Left ventricle myocardium inferior (tissue), 1 donor: ENCODE measurements at regions of chr19 and their contacts with region 1.

Region 1: GRCh38 chr19:9295411-9295849 is 14.2 kb downstream of the ZNF699 start:
- DNase-seq: no peak
- H3K4me3 ChIP-seq: no peak overlapping the region
- H3K27ac ChIP-seq: no peak overlapping the region
- H3K4me1 ChIP-seq: no peaks in the 10 kb centered on the region
- H3K27me3 ChIP-seq: no peaks in the 10 kb centered on the region
- CTCF ChIP-seq: no peak

Region 2: GRCh38 chr19:9075064-9075949 is 220.1 kb before region 1 on chr19:
- intact Hi-C with region 1: no loop called
- DNase-seq: peak; percentile 33
- H3K4me3 ChIP-seq: no peak overlapping the region
- H3K27ac ChIP-seq: no peak overlapping the region
- H3K4me1 ChIP-seq: peaks cover 10% of the 10 kb centered on the region
- H3K27me3 ChIP-seq: no peaks in the 10 kb centered on the region
- CTCF ChIP-seq: no peak

Region 3: GRCh38 chr19:9342610-9343304 is 47.3 kb after region 1 on chr19:
- intact Hi-C with region 1: loop called (anchors 5 kb)
- DNase-seq: no peak
- H3K4me3 ChIP-seq: no peak overlapping the region
- H3K27ac ChIP-seq: no peak overlapping the region
- H3K4me1 ChIP-seq: no peaks in the 10 kb centered on the region
- H3K27me3 ChIP-seq: no peaks in the 10 kb centered on the region
- CTCF ChIP-seq: no peak

Region 4: GRCh38 chr19:9362905-9363304 is 67.5 kb after region 1 on chr19 and contains the start of gene ZNF177:
- intact Hi-C with region 1: no loop called
- DNase-seq: no peak
- H3K4me3 ChIP-seq: peak within 1 kb of the TSS; percentile 52
- H3K27ac ChIP-seq: no peak within 1 kb of the TSS
- H3K4me1 ChIP-seq: peaks cover 3% of the 10 kb centered on the region
- H3K27me3 ChIP-seq: no peaks in the 10 kb centered on the region
- CTCF ChIP-seq: no peak
- total RNA-seq, gene ZNF177: 3.5 TPM